Head of caudate nucleus (tissue), 42 donors: ENCODE measurements at regions of chr7 and their contacts with region 1.

Region 1: DNA sequence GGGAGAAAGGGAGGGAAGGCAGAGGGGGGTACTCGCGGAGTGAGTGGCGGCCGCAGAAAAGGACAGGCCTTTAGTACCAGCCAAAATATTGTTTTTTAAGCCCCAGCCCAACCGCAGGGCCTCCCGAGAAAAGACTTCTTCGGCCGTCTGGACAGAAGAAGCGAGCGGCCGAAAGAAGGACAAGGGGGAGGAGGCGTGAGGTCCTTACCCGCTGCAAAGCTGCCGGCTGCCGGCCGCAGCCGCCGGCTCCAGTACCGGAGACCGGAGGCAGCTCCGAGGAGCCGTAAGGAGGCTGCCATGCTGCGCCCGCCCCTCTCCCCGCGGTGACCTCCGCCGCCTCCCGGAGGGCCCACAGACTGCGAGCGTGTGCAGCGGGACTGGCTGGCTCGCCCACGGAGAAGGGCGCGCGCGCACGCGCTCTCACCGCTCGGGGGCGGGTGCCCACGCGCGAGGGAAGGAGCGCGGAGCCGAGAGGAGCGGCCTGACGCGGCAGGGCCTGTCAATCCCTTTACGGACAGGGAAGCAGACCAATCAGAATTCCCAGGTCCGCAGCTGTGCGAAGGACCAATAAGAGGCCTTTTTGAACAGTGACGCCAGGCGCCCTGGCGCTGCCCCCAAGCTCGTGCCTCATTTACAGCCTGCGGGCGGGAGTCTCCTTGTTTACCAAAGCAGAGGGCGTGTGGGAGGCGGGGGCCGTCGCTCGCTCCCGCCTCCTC is at the start of gene HIBADH:
- DNase-seq: peak; percentile 95 to 99 (median 98)

Region 2: GRCh38 chr7:27739909-27740448 is 77.3 kb after region 1 on chr7 and contains the start of gene TAX1BP1:
- intact Hi-C with region 1: loop called (anchors 5 kb)
- DNase-seq: peak; percentile 89 to 99 (median 98)